Heart right ventricle (tissue), 16 donors: ENCODE measurements at regions of chr19 and their contacts with region 1.

Region 1: DNA sequence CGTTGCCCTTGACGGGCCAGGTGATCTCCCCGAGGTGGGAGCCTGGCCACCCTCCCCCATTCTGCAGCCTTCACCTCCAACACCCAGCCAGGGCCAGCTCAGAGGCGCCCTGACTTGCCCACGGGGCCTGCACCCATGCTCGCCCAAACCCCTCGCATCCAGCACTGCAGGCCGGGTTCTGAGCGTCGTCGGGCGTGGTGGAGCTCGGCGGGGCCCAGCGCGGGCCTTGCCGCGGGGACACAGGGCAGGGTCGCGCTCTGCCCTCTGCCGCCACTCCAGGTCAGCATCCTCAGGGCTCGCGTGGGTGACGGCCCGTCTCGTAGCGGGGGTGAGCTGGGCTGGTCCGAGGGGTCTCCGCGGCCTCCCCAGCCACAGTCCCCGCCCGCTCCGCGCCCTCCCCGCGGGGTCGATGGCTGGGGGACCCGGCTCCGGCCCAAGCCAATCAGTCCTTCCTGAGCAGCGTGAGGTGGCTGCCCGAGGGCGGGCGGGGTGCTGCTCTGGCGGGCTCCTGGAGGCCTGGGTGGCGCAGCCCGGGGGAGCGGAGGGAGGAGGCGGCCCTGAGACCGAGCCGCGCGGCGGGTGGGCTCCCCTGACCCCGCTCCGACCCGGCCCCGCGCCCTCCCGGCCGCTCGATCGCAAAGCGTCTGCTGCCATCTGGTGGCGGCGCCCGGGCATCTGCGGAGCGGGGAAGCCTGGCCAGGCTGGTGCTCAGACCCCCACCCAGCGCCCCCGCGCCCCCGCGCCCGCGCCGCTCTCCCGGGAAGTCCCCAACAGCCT is 61.4 kb downstream of the CCNE1 start:
- DNase-seq: peak; percentile 32 to 60
- ATAC-seq: peak; percentile 73 to 87 (median 78)
- H3K4me3 ChIP-seq: peak overlapping the region in 9 of 10 donors; percentile 39 to 57 (median 53)
- H3K27ac ChIP-seq: no peak overlapping the region
- H3K4me1 ChIP-seq: peaks cover 6 to 33% (median 14%) of the 10 kb centered on the region in 9 donors
- H3K27me3 ChIP-seq: peaks cover 4 to 44% (median 33%) of the 10 kb centered on the region in 7 donors
- CTCF ChIP-seq: peak; percentile 75 to 95 (median 87)

Region 2: GRCh38 chr19:29735800-29736199 is 137.4 kb before region 1 on chr19:
- intact Hi-C with region 1: loop called in 9 of 10 experiments (anchors 1 to 10 kb)
- DNase-seq: no peak
- ATAC-seq: no peak
- H3K4me3 ChIP-seq: no peak overlapping the region
- H3K27ac ChIP-seq: no peak overlapping the region
- H3K4me1 ChIP-seq: no peaks in the 10 kb centered on the region
- H3K27me3 ChIP-seq: peaks cover 0 to 49% (median 16%) of the 10 kb centered on the region in 7 donors
- CTCF ChIP-seq: no peak

Region 3: GRCh38 chr19:29761575-29762232 is 111.5 kb before region 1 on chr19:
- intact Hi-C with region 1: loop called in 7 of 10 experiments (anchors 2 to 5 kb)
- DNase-seq: no peak
- ATAC-seq: no peak
- H3K4me3 ChIP-seq: no peak overlapping the region
- H3K27ac ChIP-seq: no peak overlapping the region
- H3K4me1 ChIP-seq: peaks cover 0 to 7% (median 0%) of the 10 kb centered on the region in 9 donors
- H3K27me3 ChIP-seq: peaks cover 0 to 36% (median 9%) of the 10 kb centered on the region in 7 donors
- CTCF ChIP-seq: no peak

Region 4: GRCh38 chr19:29771708-29772414 is 101.4 kb before region 1 on chr19:
- intact Hi-C with region 1: loop called in 4 of 10 experiments (anchors 2 to 5 kb)
- DNase-seq: peak; percentile 15 to 38
- ATAC-seq: peak in 5 of 8 donors; percentile 53 to 80 (median 62)
- H3K4me3 ChIP-seq: no peak overlapping the region
- H3K27ac ChIP-seq: no peak overlapping the region
- H3K4me1 ChIP-seq: peaks cover 0 to 4% (median 0%) of the 10 kb centered on the region in 9 donors
- H3K27me3 ChIP-seq: peaks cover 0 to 5% (median 0%) of the 10 kb centered on the region in 7 donors
- CTCF ChIP-seq: peak; percentile 56 to 83 (median 73)